Activated naive CD4-positive, alpha-beta T cell treated with anti-CD3 and anti-CD28 coated beads for 36 hours (primary cell): ENCODE measurements at regions of chr6 and their contacts with region 1.

Region 1: GRCh38 chr6:108558372-108559096 is 2.2 kb upstream of the FOXO3 start:
- DNase-seq: peak; percentile 97
- H3K4me3 Mint-ChIP-seq: peak overlapping the region; percentile 88
- H3K27ac Mint-ChIP-seq: peak overlapping the region; percentile 89
- H3K4me1 Mint-ChIP-seq: peaks cover 16% of the 10 kb centered on the region
- H3K27me3 Mint-ChIP-seq: peaks cover 10% of the 10 kb centered on the region

Region 2: DNA sequence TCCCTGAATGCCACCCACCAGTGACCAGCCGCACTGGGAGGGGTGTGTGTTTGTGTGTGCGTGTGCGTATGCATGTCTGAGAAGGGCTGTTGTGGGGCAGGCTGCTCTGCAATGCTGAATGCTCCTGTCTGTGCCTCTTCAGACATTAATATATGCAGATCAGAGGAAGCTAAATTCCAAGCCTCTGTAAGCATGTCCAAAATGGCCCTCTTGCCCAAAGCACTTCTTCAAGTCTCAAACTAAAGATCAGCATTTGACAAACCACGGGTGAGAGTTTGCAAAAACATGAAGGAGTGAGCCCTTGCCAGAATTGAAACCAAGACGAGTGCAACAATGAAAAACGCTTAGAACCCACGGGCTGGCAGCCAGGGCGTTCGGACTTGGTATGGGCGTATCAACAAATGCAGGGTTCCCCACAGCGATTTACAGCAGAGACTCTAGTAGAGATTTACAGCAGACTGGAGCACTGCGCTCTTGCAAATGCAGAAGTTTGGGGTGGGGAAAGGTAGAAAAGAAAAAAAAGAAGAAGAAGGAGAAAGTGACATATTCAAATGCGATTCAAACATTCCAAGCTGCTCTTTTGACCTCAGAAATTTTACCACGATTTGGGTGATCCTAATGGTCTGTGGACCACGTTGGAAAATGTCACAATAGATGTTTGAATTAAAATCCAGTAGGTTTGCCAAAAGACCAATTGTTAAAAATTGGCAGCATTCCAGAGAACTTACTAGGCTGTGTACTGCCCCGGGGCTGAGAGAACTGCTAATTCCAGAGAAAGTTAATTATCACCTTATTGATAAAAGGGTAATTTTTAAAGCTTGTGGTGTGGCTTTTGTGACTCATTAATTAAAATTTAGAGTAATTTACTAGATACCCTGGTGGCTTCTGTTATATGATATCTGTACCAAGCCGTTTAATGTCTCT is 737.9 kb before region 1 on chr6:
- CTCF ChIA-PET with region 1: no interaction called
- intact Hi-C with region 1: loop called (anchors 2 kb)
- DNase-seq: peak; percentile 55
- H3K4me3 Mint-ChIP-seq: peak overlapping the region; percentile 88
- H3K27ac Mint-ChIP-seq: peak overlapping the region; percentile 98
- H3K4me1 Mint-ChIP-seq: peaks cover 83% of the 10 kb centered on the region
- H3K27me3 Mint-ChIP-seq: no peaks in the 10 kb centered on the region

Region 3: DNA sequence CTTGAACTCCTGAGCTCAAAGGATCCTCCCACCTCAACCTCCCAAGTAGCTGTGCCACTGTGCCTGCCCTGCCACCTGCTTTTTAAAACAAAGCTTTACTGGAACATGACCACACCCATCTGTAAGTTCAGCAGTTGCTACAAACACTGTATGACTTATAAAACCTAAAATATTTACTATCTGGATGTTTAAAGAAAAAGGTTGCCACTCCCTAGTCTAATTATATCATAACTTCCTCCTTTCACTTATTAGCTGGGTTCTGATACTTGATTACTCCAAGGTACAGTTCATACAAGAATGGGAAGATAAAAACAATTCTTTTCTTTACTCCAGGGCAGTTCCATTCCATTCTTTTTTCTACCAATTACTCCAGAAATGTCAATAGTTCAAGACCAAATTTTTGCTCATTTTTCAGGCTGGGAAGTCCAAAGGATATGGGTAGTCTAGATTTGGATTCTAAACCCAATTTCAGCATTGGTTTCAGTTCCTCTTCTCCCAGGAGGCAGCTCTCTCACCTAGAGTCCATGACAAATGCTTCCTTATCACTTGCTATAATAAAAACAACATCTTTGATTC is 663.6 kb before region 1 on chr6:
- CTCF ChIA-PET with region 1: no interaction called
- intact Hi-C with region 1: no loop called
- DNase-seq: no peak
- H3K4me3 Mint-ChIP-seq: no peak overlapping the region
- H3K27ac Mint-ChIP-seq: no peak overlapping the region
- H3K4me1 Mint-ChIP-seq: peaks cover 2% of the 10 kb centered on the region
- H3K27me3 Mint-ChIP-seq: no peaks in the 10 kb centered on the region

Region 4: DNA sequence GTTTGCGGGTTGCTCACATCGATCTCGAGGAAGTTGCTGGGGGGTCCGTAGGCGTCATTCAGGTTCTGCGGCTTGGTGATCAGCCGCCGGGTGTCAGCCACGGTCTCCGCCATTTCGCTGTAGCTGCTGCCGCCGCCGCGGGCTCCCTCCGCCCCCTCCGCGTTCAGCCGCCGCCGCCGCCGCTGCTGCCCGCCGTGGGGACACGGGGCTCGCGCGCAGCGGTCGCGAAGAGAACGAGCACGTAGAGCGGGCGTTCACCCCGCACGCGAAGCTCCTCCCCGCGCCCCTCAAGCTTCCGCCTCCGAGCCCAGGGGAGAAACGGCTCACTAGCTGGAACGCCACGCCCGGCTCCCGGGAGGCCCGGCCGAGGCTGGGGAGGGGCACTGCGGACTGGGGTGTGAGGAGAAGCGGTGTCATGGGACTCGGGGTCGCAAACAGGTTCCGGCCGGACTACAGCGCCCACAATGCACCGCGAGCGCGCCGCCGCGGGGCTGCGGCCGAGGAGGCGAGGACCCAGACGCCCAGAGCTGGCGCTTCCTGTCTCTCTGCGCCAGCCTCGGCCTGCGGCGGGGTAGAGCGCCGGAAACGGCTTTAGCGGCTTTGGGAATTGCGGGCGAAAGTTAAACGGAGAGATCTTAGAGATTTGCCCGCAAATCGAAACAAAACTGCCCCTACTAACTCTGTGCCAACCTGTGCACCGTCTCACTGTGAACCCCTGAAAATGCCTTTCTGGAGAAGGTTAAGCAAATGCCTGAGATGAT is 297.5 kb before region 1 on chr6 and contains the start of gene SNX3:
- CTCF ChIA-PET with region 1: no interaction called
- intact Hi-C with region 1: loop called (anchors 1 kb)
- DNase-seq: peak; percentile 90
- H3K4me3 Mint-ChIP-seq: peak within 1 kb of the TSS; percentile 77
- H3K27ac Mint-ChIP-seq: peak within 1 kb of the TSS; percentile 89
- H3K4me1 Mint-ChIP-seq: peaks cover 19% of the 10 kb centered on the region
- H3K27me3 Mint-ChIP-seq: no peaks in the 10 kb centered on the region
- total RNA-seq, gene SNX3: 59.9 to 65.7 TPM

Region 5: DNA sequence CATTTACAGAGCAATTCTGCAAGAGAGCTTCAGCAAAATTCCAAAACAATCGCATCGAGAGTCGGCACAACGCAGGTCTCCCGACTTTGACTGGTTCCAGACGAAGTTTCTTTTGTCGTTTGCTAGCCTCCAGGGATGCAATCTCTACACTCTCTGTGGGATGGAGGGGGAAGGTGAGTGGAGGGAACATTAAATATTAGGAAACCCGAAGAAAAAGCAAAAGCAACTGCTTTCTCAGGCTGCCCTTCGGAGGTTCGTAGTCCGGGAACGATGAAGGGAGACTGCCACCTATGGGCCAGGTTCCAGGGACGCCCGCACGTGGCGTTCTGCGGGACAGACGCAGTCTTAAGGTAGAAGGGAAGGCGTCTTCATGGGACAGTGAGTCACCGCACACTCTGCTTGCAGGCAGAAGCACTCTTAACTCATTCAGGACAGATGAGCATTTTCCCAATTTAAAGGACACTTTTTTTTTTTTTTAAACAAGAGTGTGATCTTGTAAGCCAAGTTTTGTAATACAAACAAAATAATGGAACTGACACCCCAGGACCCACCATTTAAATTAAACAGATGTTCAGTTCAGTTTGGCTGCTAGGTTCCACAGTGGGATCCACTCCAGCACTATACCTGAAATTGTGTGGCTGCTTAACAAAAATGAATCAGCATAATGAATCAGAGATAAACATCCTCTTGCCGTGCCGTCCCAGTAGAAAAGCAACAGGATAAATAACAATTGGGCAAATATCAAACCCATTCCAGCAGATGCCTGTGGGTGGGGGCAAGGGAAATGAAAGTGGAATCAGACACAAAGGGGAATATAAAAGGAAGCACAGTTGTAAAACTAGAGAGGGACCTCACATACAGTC is 223.9 kb after region 1 on chr6:
- CTCF ChIA-PET with region 1: interaction called, 3 read pairs
- intact Hi-C with region 1: loop called (anchors 1 kb)
- DNase-seq: peak; percentile 92
- H3K4me3 Mint-ChIP-seq: peak overlapping the region; percentile 68
- H3K27ac Mint-ChIP-seq: no peak overlapping the region
- H3K4me1 Mint-ChIP-seq: peaks cover 10% of the 10 kb centered on the region
- H3K27me3 Mint-ChIP-seq: peaks cover 3% of the 10 kb centered on the region

Region 6: DNA sequence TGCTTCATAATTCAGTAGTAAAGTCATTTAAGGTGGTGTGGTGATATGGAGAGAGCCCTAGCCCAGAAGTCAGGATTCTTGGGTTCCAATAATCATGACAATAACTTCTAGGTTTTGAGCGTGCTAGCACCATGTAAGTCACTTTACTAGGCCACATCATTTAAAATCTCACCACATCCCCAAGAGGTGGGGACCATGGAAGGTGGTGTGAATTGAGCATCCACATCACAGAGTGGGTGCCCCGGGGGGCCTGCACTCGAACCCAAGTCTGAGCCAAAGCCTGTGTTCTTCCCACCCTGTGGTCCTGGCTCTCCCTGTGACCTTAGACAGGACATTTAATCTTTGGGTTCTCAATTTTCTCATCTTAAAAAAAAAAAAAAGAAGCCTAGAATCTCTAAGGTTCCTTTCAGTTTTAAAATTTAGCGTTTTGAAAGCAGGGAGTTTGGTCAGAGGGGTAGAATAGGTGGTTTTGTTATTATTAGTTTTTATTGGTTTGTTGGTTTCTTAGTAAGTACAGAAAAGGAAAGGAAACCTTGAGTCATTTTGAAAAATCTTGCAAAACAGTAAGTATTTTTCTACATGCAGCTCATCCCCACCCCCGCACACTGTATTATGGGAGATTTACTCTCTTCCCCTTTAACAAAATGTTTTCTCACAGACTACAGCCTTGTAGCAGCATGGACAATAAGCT is 316.1 kb after region 1 on chr6:
- CTCF ChIA-PET with region 1: no interaction called
- intact Hi-C with region 1: loop called (anchors 2 kb)
- DNase-seq: peak; percentile 80
- H3K4me3 Mint-ChIP-seq: peak overlapping the region; percentile 20
- H3K27ac Mint-ChIP-seq: no peak overlapping the region
- H3K4me1 Mint-ChIP-seq: peaks cover 22% of the 10 kb centered on the region
- H3K27me3 Mint-ChIP-seq: peaks cover 2% of the 10 kb centered on the region

Region 7: DNA sequence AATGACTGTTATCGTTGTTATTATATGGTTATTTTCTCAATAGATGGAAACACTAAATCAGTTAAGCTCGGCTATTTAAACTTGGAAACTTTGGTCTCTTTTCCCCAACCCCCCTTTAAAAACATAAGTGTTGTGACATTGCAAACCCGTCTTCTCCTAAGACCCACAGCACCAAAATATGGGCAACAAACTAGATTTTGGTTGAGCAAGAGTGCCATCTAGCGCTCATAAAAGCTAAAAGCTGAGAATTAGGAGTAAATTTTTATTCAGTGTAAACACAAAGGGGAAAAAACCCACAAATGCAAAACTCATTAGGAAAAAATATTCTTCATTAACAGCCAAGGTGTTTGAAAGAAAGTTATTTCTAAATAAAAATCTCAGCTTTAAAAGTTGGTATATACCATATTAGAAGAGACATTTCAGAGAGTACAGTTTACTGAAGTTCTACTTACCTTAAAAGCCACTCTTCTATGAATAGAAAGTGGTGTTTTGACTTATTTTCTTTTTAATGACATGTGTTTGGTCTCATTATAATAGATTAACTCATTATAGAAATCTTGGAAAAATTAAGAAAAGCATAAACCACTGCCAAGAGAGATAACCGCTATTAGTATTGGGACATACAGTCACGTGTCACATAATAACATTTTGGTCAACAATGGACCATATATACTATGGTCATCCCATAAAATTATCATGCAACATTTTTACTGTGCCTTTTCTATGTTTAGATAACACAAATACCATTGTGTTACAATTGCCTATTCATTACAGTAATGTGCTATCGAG is 515.0 kb after region 1 on chr6:
- CTCF ChIA-PET with region 1: interaction called, 13 read pairs
- intact Hi-C with region 1: loop called (anchors 5 kb)
- DNase-seq: peak; percentile 66
- H3K4me3 Mint-ChIP-seq: peak overlapping the region; percentile 20
- H3K27ac Mint-ChIP-seq: no peak overlapping the region
- H3K4me1 Mint-ChIP-seq: peaks cover 20% of the 10 kb centered on the region
- H3K27me3 Mint-ChIP-seq: no peaks in the 10 kb centered on the region